ENCODE measurements at regions of chr11 and their contacts with region 1.

Region 1: DNA sequence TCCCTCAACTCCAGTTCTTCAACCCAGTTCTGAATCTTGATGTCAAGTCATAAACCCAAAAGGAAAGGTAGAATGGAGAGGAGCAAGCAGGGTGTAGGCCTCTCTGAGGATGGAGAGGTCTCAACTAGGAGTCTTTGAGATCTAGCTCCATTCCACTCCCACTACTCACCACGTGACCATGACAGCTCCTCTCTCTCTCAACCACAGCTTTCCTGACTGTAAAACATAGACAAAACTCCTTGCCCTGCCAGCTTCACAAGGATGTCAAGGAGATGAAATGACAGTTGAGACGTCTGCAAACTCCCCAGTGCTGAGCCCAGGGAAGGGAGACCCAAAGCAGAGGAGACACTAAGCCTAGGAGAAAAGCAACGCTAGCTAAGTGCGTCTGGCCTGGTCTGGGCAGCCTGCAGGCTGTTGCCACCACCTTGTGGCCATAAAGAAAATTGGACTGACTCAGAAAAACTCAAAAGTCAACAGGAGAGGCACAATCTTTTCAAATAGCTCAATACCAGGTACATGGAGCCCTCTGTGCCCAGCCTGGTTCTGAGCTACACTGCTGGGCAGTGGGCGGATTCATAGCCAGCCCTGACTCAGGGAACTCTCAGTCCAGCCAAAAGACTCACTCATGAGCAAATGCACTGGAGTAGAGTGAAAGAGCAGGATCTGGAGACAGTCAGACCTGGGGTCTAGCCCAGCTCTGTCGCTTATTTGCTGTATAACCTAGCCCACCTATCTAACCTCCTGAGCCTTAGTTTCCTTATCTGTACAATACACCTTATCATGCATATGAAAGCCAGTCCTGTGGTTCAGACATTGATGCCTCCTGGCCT is 3.4 kb downstream of the CLPB start:
- DNase-seq: peak; percentile 51
- H3K4me3 Mint-ChIP-seq: no peak overlapping the region
- H3K27ac Mint-ChIP-seq: no peak overlapping the region
- H3K4me1 Mint-ChIP-seq: peaks cover 28% of the 10 kb centered on the region
- H3K27me3 Mint-ChIP-seq: no peaks in the 10 kb centered on the region
- CTCF ChIP-seq: peak; percentile 81

Region 2: GRCh38 chr11:72091005-72091691 is 339.8 kb before region 1 on chr11:
- CTCF ChIA-PET with region 1: interaction called, 7 read pairs
- POLR2A ChIA-PET with region 1: no interaction called
- intact Hi-C with region 1: loop called (anchors 1 kb)
- DNase-seq: peak; percentile 69
- H3K4me3 Mint-ChIP-seq: no peak overlapping the region
- H3K27ac Mint-ChIP-seq: peak overlapping the region; percentile 70
- H3K4me1 Mint-ChIP-seq: no peaks in the 10 kb centered on the region
- H3K27me3 Mint-ChIP-seq: no peaks in the 10 kb centered on the region
- CTCF ChIP-seq: peak; percentile 77

Region 3: GRCh38 chr11:72222907-72223614 is 207.9 kb before region 1 on chr11:
- CTCF ChIA-PET with region 1: interaction called, 10 read pairs
- POLR2A ChIA-PET with region 1: interaction called, 3 read pairs
- intact Hi-C with region 1: no loop called
- DNase-seq: peak; percentile 94
- H3K4me3 Mint-ChIP-seq: peak overlapping the region; percentile 87
- H3K27ac Mint-ChIP-seq: peak overlapping the region; percentile 39
- H3K4me1 Mint-ChIP-seq: peaks cover 8% of the 10 kb centered on the region
- H3K27me3 Mint-ChIP-seq: peaks cover 5% of the 10 kb centered on the region
- CTCF ChIP-seq: no peak

Region 4: DNA sequence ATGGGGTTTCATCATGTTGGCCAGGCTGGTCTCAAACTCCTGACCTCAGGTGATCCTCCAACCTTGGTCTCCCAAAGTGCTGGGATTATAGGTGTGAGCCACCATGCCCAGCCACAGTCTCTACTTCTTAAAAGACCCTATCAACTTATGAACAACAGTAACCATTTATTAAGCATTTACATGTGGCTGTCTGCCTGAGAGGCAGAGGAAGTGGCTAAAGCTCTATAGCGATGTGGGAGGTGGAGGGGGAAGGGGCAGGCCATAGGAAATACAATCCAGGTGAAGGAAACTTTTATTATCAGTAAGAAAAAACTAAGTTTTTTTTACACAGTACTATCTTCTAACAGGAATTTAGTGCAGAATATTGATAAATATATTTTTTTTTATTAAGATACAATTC is 99.2 kb before region 1 on chr11:
- CTCF ChIA-PET with region 1: no interaction called
- POLR2A ChIA-PET with region 1: no interaction called
- intact Hi-C with region 1: no loop called
- DNase-seq: no peak
- H3K4me3 Mint-ChIP-seq: no peak overlapping the region
- H3K27ac Mint-ChIP-seq: no peak overlapping the region
- H3K4me1 Mint-ChIP-seq: no peaks in the 10 kb centered on the region
- H3K27me3 Mint-ChIP-seq: no peaks in the 10 kb centered on the region
- CTCF ChIP-seq: no peak

Region 5: DNA sequence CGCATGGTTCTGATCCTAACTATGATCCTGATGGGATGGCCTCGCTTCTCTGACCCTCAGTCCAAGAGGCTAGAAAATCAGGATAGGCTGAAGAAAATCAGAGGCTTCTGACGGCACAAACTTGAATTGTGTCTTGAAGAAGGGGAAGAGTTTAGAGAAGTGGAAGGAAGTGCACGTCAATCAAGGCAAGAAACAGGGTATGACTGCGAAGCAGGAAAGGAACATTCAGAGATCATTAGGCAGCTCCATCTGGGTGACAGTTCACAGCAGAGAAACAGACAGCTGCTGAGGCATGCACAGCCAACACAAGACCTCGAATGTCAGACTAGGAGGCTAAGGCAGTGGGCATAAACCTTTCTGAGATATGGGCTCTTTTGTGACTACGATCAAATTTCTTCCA is 25.9 kb before region 1 on chr11:
- CTCF ChIA-PET with region 1: interaction called, 11 read pairs
- POLR2A ChIA-PET with region 1: no interaction called
- intact Hi-C with region 1: no loop called
- DNase-seq: no peak
- H3K4me3 Mint-ChIP-seq: no peak overlapping the region
- H3K27ac Mint-ChIP-seq: no peak overlapping the region
- H3K4me1 Mint-ChIP-seq: peaks cover 9% of the 10 kb centered on the region
- H3K27me3 Mint-ChIP-seq: no peaks in the 10 kb centered on the region
- CTCF ChIP-seq: no peak

Measured in MCF 10A (cell line).